GM23248 (cell line): ENCODE measurements at regions of chr17 and their contacts with region 1.

Region 1: GRCh38 chr17:27622986-27623385 is 8.0 kb upstream of the LGALS9 start:
- DNase-seq: no peak
- H3K4me3 ChIP-seq: no peak overlapping the region
- H3K27ac ChIP-seq: no peak overlapping the region
- H3K4me1 ChIP-seq: no peaks in the 10 kb centered on the region
- H3K27me3 ChIP-seq: no peaks in the 10 kb centered on the region

Region 2: DNA sequence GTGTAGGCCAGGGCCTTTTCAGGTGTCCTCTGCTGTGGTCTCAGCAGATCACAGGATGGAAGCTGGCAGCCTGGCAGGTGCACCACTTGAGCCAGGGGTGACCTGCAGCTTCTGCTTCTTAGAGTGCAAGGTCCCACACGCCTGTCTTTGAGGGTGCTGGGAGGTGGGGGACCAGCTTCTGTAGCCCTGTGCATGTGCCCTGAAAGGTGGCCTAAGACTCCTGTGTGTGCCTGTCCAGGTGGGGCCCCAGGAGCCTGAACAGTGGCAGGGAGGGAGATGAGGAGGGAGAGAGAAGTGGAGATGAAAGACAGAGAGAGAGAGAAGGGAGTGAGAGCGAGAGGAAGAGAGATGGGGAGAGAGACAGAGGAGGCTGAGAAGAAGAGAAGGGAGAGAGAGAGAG is 54.2 kb after region 1 on chr17:
- in situ Hi-C with region 1: loop called (anchors 10 kb)
- DNase-seq: no peak
- H3K4me3 ChIP-seq: no peak overlapping the region
- H3K27ac ChIP-seq: no peak overlapping the region
- H3K4me1 ChIP-seq: no peaks in the 10 kb centered on the region
- H3K27me3 ChIP-seq: peaks cover 6% of the 10 kb centered on the region; the same call in 1 of the 2 replicates

Region 3: DNA sequence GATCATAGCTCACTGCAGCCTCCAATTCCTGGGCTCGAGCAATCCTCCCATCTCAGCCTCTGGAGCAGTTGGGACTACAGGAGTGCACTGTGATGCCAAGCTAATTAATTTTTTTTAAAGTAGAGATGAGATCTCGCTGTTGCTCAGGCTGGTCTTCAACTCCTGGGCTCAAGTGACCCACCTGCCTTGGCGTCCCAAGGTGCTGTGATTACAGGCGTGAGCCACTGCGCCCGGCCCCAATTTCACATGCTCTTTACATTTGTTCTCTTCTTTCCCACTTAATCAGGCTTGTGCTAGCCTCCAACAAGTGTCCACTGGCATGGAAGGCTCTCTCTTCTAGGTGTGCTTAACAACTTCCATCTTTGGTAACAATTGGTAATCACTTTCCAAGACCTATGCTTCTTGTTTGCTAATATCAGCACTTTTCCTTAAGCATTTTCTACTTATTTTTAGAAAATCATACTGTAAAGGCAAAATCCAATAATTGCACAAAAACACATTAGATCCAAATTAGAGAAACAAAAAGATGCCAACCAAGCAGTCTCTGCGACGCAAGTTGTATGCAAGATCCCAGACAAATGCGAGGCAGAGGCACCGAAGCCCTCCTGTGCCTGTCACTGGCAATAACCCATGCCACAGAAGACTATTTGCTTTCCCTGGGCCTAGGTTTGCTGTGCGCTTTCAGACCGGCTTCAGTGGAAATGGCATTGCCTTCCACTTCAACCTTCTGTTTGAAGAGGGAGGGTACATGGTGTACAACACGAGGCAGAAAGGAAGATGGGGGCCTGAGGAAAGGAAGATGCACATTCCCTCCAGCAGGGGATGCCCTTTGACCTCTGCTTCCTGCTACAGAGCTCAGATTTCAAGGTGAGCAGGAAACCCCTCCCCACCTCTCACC is 124.7 kb after region 1 on chr17:
- in situ Hi-C with region 1: loop called (anchors 10 kb)
- DNase-seq: no peak
- H3K4me3 ChIP-seq: no peak overlapping the region
- H3K27ac ChIP-seq: no peak overlapping the region
- H3K4me1 ChIP-seq: no peaks in the 10 kb centered on the region
- H3K27me3 ChIP-seq: no peaks in the 10 kb centered on the region